ENCODE measurements at regions of chr13 and their contacts with region 1.

Region 1: GRCh38 chr13:30132623-30133553 is 174.5 kb downstream of the KATNAL1 start:
- DNase-seq: peak; percentile 91 to 98 (median 95)
- ATAC-seq: peak; percentile 99
- H3K4me3 ChIP-seq: peak overlapping the region; percentile 16
- H3K4me3 Mint-ChIP-seq: peak overlapping the region in 8 of 10 donors; percentile 33 to 73 (median 64)
- H3K27ac ChIP-seq: no peak overlapping the region
- H3K27ac Mint-ChIP-seq: peak overlapping the region in 8 of 9 donors; percentile 11 to 89 (median 72)
- H3K4me1 ChIP-seq: peaks cover 4 to 7% of the 10 kb centered on the region in 2 donors
- H3K4me1 Mint-ChIP-seq: peaks cover 12 to 19% (median 17%) of the 10 kb centered on the region in 7 donors
- H3K27me3 ChIP-seq: no peaks in the 10 kb centered on the region
- H3K27me3 Mint-ChIP-seq: no peaks in the 10 kb centered on the region

Region 2: GRCh38 chr13:29835280-29836061 is 297.4 kb before region 1 on chr13:
- CTCF ChIA-PET with region 1: no interaction called
- POLR2A ChIA-PET with region 1: no interaction called
- intact Hi-C with region 1: no loop called
- DNase-seq: no peak
- ATAC-seq: no peak
- H3K4me3 ChIP-seq: no peak overlapping the region
- H3K4me3 Mint-ChIP-seq: peak overlapping the region in 2 of 10 donors; percentile 1 to 26
- H3K27ac ChIP-seq: no peak overlapping the region
- H3K27ac Mint-ChIP-seq: peak overlapping the region in 1 of 9 donors; percentile 21
- H3K4me1 ChIP-seq: peaks cover 0 to 7% of the 10 kb centered on the region in 2 donors
- H3K4me1 Mint-ChIP-seq: peaks cover 6 to 81% (median 67%) of the 10 kb centered on the region in 7 donors
- H3K27me3 ChIP-seq: no peaks in the 10 kb centered on the region
- H3K27me3 Mint-ChIP-seq: no peaks in the 10 kb centered on the region

Region 3: GRCh38 chr13:30114571-30115256 is 18.2 kb before region 1 on chr13:
- CTCF ChIA-PET with region 1: interaction called, 45 read pairs
- POLR2A ChIA-PET with region 1: interaction called, 10 read pairs
- intact Hi-C with region 1: no loop called
- DNase-seq: peak; percentile 81 to 94 (median 91)
- ATAC-seq: peak; percentile 95
- H3K4me3 ChIP-seq: peak overlapping the region; percentile 48
- H3K4me3 Mint-ChIP-seq: peak overlapping the region; percentile 74 to 89 (median 84)
- H3K27ac ChIP-seq: peak overlapping the region; percentile 39
- H3K27ac Mint-ChIP-seq: peak overlapping the region in 8 of 9 donors; percentile 43 to 90 (median 80)
- H3K4me1 ChIP-seq: peaks cover 10 to 17% of the 10 kb centered on the region in 2 donors
- H3K4me1 Mint-ChIP-seq: peaks cover 17 to 41% (median 34%) of the 10 kb centered on the region in 7 donors
- H3K27me3 ChIP-seq: no peaks in the 10 kb centered on the region
- H3K27me3 Mint-ChIP-seq: peaks cover 0 to 11% (median 0%) of the 10 kb centered on the region in 5 donors

Region 4: DNA sequence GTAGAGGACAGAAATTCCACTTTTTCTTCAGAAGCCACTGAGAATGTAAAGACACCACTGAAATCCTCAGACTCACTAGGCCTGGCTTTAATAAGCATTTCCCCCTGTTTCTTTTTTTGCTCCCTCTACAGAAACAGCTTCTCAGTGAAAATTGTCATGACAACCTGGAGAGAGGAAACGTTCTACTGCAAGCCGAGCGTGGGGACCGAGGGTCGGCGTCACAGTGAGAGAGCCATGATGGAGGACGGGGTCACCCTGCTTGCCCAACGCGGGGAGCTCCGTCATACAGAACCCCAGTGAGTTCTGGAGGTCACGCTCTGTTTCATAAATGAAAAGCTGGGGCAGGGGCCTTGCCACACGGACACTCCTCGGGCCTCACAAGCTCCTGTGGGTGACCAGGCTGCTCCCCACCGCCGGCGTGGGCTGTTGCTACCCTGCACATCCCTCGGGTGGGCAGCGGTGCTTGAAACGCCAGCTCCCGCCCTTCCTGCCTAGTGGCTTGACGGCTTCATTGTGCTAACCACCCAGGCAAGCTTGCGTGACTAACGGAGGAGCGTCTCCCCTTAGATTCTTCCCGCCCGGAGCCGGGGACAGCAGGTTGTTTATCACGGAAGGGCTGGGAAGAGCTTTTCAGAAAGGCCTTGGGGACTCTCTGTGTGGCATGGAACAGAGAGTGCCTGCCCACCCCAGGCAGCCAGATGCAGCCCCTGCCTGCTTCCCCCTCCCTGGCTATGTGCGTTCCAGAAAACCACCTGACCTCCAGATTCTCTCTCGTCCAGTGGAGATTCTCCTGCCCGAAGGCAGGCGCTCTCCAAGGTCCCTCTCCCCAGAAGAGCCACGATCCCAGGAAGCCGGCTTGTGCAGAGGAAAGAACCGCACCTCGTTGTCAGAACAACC is 20.9 kb after region 1 on chr13:
- CTCF ChIA-PET with region 1: interaction called, 100 read pairs
- POLR2A ChIA-PET with region 1: interaction called, 16 read pairs
- intact Hi-C with region 1: loop called (anchors 1 kb)
- DNase-seq: no peak
- ATAC-seq: no peak
- H3K4me3 ChIP-seq: no peak overlapping the region
- H3K4me3 Mint-ChIP-seq: no peak overlapping the region
- H3K27ac ChIP-seq: no peak overlapping the region
- H3K27ac Mint-ChIP-seq: peak overlapping the region in 4 of 9 donors; percentile 31 to 54 (median 40)
- H3K4me1 ChIP-seq: peaks cover 36 to 73% of the 10 kb centered on the region in 2 donors
- H3K4me1 Mint-ChIP-seq: peaks cover 34 to 79% (median 66%) of the 10 kb centered on the region in 7 donors
- H3K27me3 ChIP-seq: no peaks in the 10 kb centered on the region
- H3K27me3 Mint-ChIP-seq: no peaks in the 10 kb centered on the region

Region 5: GRCh38 chr13:30306762-30307193 is 173.9 kb after region 1 on chr13:
- CTCF ChIA-PET with region 1: interaction called, 7 read pairs
- POLR2A ChIA-PET with region 1: no interaction called
- intact Hi-C with region 1: loop called (anchors 1 to 2 kb)
- DNase-seq: peak; percentile 78 to 91 (median 88)
- ATAC-seq: peak; percentile 95
- H3K4me3 ChIP-seq: peak overlapping the region; percentile 96
- H3K4me3 Mint-ChIP-seq: peak overlapping the region; percentile 79 to 92 (median 89)
- H3K27ac ChIP-seq: peak overlapping the region; percentile 78
- H3K27ac Mint-ChIP-seq: peak overlapping the region in 8 of 9 donors; percentile 37 to 89 (median 82)
- H3K4me1 ChIP-seq: peaks cover 0 to 4% of the 10 kb centered on the region in 2 donors
- H3K4me1 Mint-ChIP-seq: peaks cover 0 to 48% (median 7%) of the 10 kb centered on the region in 7 donors
- H3K27me3 ChIP-seq: no peaks in the 10 kb centered on the region
- H3K27me3 Mint-ChIP-seq: no peaks in the 10 kb centered on the region

Region 6: DNA sequence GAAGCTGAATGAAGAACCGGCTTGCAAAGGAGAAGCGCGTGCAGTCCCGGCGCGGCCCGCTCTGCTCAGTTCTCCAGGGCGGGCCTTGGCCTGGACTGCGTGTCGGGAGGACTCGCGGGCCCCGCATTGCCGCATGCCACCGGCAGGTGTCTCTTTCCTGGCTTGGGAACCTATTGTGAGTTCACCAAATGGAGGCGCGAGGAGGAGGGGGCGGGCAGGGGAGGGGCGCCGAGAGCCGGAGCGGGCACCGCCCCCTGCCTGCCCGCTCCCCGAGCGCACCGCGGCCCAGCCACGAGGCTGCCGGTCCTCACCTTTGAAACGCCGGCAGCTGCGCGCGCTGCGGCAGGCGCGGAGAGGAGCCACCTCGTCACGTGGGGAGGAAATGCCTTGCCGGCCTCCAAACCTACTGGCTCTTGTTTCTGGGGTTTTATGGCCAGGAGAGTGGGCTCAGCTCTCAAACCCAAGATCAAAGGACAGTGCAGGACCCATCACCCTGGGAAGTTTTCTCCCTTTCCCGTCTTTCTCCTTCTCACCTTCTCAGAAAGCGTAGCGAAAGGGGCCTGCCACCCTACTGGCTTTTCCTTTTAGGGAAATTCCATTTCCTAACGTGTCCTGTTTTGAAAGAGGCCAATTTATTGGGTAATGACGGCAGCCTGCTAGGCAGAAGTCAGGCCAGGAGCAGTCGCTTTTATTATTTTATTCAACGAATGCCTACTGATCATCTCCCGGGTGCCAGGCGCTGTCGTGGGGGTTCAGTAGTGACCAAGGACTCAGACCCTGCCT is 275.6 kb after region 1 on chr13:
- CTCF ChIA-PET with region 1: interaction called, 7 read pairs
- POLR2A ChIA-PET with region 1: no interaction called
- intact Hi-C with region 1: loop called in 1 of 2 experiments (anchors 1 kb)
- DNase-seq: peak; percentile 78 to 89 (median 85)
- ATAC-seq: peak; percentile 97
- H3K4me3 ChIP-seq: peak overlapping the region; percentile 44
- H3K4me3 Mint-ChIP-seq: peak overlapping the region; percentile 64 to 78 (median 72)
- H3K27ac ChIP-seq: peak overlapping the region; percentile 52
- H3K27ac Mint-ChIP-seq: peak overlapping the region; percentile 51 to 87 (median 83)
- H3K4me1 ChIP-seq: peaks cover 9 to 14% of the 10 kb centered on the region in 2 donors
- H3K4me1 Mint-ChIP-seq: peaks cover 6 to 46% (median 37%) of the 10 kb centered on the region in 7 donors
- H3K27me3 ChIP-seq: no peaks in the 10 kb centered on the region
- H3K27me3 Mint-ChIP-seq: peaks cover 0 to 12% (median 0%) of the 10 kb centered on the region in 5 donors

Region 7: DNA sequence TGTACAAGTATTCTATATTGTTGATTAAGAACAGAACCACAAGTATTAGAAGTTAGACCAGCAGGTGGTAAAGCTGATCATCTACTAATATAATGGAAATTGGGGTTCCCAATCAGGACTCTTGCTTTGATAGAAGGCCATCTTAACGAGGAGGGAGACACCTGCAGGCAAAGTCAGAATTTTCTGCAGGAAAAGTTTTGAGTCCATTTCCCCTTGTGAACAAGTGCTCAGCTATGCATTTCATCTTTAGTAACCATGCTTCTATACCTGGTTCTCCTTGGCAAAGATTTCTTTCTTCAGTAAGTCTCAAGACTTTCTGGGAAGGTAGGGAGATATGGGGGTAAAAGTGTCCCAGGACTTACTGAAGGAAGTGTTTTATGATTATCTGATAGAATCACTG is 448.7 kb after region 1 on chr13:
- CTCF ChIA-PET with region 1: interaction called, 5 read pairs
- POLR2A ChIA-PET with region 1: interaction called, 3 read pairs
- intact Hi-C with region 1: loop called in 1 of 2 experiments (anchors 1 kb)
- DNase-seq: peak in 4 of 9 donors; percentile 5 to 24 (median 14)
- ATAC-seq: no peak
- H3K4me3 ChIP-seq: no peak overlapping the region
- H3K4me3 Mint-ChIP-seq: no peak overlapping the region
- H3K27ac ChIP-seq: no peak overlapping the region
- H3K27ac Mint-ChIP-seq: no peak overlapping the region
- H3K4me1 ChIP-seq: peaks cover 4 to 13% of the 10 kb centered on the region in 2 donors
- H3K4me1 Mint-ChIP-seq: peaks cover 6 to 18% (median 14%) of the 10 kb centered on the region in 7 donors
- H3K27me3 ChIP-seq: no peaks in the 10 kb centered on the region
- H3K27me3 Mint-ChIP-seq: peaks cover 0 to 30% (median 0%) of the 10 kb centered on the region in 5 donors

Region 8: DNA sequence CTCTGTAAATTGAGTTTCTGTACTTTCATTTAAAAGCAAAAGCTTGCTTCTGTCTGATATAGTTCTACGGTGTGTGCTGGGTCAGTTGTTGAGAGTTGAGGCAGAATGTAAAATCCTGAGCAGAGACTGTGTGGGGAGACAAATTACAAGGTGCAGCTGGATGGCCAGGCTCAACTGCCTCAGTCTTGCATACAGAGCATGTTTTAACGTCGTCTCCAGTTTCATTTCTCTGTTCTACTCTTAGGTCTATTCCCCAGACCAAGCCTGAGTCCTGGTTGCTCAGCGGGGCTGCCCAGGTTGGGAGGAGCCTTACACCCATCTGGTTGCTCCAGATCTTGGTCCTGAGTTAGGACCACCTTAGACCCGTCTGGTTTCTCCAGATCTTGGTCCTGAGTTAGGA is 718.8 kb after region 1 on chr13:
- CTCF ChIA-PET with region 1: no interaction called
- POLR2A ChIA-PET with region 1: no interaction called
- intact Hi-C with region 1: no loop called
- DNase-seq: no peak
- ATAC-seq: no peak
- H3K4me3 ChIP-seq: no peak overlapping the region
- H3K4me3 Mint-ChIP-seq: no peak overlapping the region
- H3K27ac ChIP-seq: no peak overlapping the region
- H3K27ac Mint-ChIP-seq: no peak overlapping the region
- H3K4me1 ChIP-seq: no peaks in the 10 kb centered on the region
- H3K4me1 Mint-ChIP-seq: peaks cover 0 to 10% (median 0%) of the 10 kb centered on the region in 7 donors
- H3K27me3 ChIP-seq: no peaks in the 10 kb centered on the region
- H3K27me3 Mint-ChIP-seq: peaks cover 0 to 21% (median 4%) of the 10 kb centered on the region in 5 donors

Region 9: GRCh38 chr13:31044377-31045285 is 911.7 kb after region 1 on chr13:
- CTCF ChIA-PET with region 1: no interaction called
- POLR2A ChIA-PET with region 1: no interaction called
- intact Hi-C with region 1: loop called in 1 of 2 experiments (anchors 2 kb)
- DNase-seq: peak; percentile 54 to 79 (median 75)
- ATAC-seq: peak; percentile 95
- H3K4me3 ChIP-seq: no peak overlapping the region
- H3K4me3 Mint-ChIP-seq: peak overlapping the region in 9 of 10 donors; percentile 19 to 81 (median 52)
- H3K27ac ChIP-seq: no peak overlapping the region
- H3K27ac Mint-ChIP-seq: peak overlapping the region in 5 of 9 donors; percentile 7 to 90 (median 46)
- H3K4me1 ChIP-seq: peaks cover 22 to 30% of the 10 kb centered on the region in 2 donors
- H3K4me1 Mint-ChIP-seq: peaks cover 22 to 52% (median 40%) of the 10 kb centered on the region in 7 donors
- H3K27me3 ChIP-seq: no peaks in the 10 kb centered on the region
- H3K27me3 Mint-ChIP-seq: peaks cover 0 to 24% (median 5%) of the 10 kb centered on the region in 5 donors